AG04450 (cell line): ENCODE measurements at regions of chr6 and their contacts with region 1.

Region 1: DNA sequence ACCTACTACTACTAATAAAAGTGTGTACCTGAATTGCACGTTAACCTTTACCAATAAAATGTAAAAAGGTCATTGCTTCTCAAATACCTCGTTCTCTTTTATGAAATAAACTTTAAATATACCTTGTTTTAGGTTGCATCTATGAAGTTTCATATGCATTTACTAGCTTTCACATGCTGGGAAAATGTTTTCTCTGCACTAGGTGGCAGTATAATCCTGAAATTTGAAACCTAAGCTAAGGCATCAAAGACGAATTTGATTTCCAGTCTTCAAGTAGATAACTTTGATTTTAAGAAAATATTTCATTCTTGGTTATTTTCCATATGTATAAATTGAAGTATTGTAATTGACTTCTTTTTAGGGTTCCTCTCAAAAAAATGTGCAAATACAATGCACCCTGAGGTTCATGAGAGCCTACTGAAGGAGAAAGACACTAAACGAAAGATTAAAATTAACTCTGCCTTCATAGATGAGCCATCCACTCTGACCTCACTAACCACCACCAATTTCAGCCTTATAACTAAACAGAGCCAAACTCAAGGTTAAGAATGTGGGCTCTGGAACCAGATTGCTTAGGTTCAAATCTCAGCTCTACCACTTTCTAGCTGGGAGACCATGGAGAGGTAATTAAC is 7.3 kb upstream of the COL9A1 start:
- DNase-seq: no peak
- H3K4me3 ChIP-seq: no peak overlapping the region
- H3K27ac ChIP-seq: no peak overlapping the region
- H3K27me3 ChIP-seq: peaks cover 22% of the 10 kb centered on the region
- CTCF ChIP-seq: peak; percentile 64

Region 2: GRCh38 chr6:70289299-70289698 is 20.9 kb before region 1 on chr6:
- CTCF ChIA-PET with region 1: interaction called, 14 read pairs
- POLR2A ChIA-PET with region 1: no interaction called
- DNase-seq: no peak
- H3K4me3 ChIP-seq: no peak overlapping the region
- H3K27ac ChIP-seq: no peak overlapping the region
- H3K27me3 ChIP-seq: no peaks in the 10 kb centered on the region
- CTCF ChIP-seq: no peak

Region 3: DNA sequence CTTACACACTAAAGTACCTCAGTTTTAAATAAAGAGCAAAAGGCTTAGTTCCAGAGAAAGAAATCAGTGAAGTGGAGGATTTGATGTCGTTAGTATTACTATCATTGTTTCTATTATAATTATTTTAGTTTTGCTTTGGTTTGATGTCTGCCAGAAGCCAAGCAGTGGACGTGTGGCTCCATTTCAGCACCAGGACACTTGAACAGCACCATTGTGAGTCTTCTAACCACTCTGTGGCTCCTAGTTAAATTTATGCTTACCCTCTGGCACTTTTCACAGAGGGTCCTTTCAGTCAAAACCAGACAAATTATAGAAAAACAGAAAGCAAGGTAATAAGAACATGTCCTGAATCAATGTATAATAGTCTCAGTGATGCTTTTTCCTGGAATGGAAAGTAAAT is 10.7 kb before region 1 on chr6:
- CTCF ChIA-PET with region 1: interaction called, 22 read pairs
- POLR2A ChIA-PET with region 1: no interaction called
- DNase-seq: no peak
- H3K4me3 ChIP-seq: no peak overlapping the region
- H3K27ac ChIP-seq: no peak overlapping the region
- H3K27me3 ChIP-seq: no peaks in the 10 kb centered on the region
- CTCF ChIP-seq: no peak

Region 4: GRCh38 chr6:70336996-70337742 is 27.0 kb after region 1 on chr6:
- CTCF ChIA-PET with region 1: no interaction called
- POLR2A ChIA-PET with region 1: no interaction called
- DNase-seq: no peak
- H3K4me3 ChIP-seq: no peak overlapping the region
- H3K27ac ChIP-seq: no peak overlapping the region
- H3K27me3 ChIP-seq: no peaks in the 10 kb centered on the region
- CTCF ChIP-seq: no peak

Region 5: DNA sequence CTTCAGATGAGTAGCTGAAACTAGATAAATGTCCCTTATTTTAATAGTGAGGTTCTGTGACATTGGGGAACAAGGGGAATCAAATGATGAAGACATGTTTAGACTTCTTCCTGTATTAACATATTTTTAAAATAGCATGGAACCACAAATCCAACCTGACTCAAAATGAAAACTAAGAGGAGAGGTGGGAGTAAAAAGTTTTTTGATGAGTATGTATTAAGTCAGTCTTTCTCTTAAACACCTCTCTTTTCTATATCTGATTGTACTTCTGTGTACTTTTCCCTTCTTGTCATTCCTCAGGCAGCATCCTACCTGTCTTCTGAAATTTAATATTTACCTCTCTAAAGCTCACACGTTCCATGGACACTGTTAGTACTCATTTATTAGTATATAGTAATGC is 247.8 kb after region 1 on chr6:
- CTCF ChIA-PET with region 1: no interaction called
- POLR2A ChIA-PET with region 1: no interaction called
- DNase-seq: no peak
- H3K4me3 ChIP-seq: no peak overlapping the region
- H3K27ac ChIP-seq: no peak overlapping the region
- H3K27me3 ChIP-seq: no peaks in the 10 kb centered on the region
- CTCF ChIP-seq: no peak

Region 6: GRCh38 chr6:70955441-70956190 is 645.4 kb after region 1 on chr6:
- CTCF ChIA-PET with region 1: interaction called, 17 read pairs
- POLR2A ChIA-PET with region 1: no interaction called
- DNase-seq: peak; percentile 27
- H3K4me3 ChIP-seq: peak overlapping the region; percentile 49
- H3K27ac ChIP-seq: no peak overlapping the region
- H3K27me3 ChIP-seq: peaks cover 48% of the 10 kb centered on the region
- CTCF ChIP-seq: peak; percentile 78

Region 7: DNA sequence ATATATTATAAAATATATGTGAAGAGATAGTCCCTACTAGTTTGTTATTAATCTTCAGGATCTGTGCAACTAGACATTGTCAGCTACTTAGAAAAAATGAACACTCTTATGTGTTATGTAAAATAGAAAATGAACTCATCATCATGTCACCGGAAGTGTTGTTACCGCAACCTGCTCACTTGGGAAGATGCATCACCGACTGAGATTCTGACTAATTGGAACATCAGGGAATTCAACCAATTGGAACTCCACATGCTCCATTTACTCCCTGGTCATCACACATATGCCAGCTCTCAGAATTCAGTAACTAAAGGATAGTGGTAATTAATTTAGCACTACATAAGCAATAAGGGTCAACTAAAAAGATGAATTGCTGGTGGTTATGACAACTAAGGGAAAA is 663.4 kb after region 1 on chr6:
- CTCF ChIA-PET with region 1: no interaction called
- POLR2A ChIA-PET with region 1: no interaction called
- DNase-seq: no peak
- H3K4me3 ChIP-seq: no peak overlapping the region
- H3K27ac ChIP-seq: no peak overlapping the region
- H3K27me3 ChIP-seq: no peaks in the 10 kb centered on the region
- CTCF ChIP-seq: no peak

Region 8: GRCh38 chr6:71012866-71013469 is 702.8 kb after region 1 on chr6:
- CTCF ChIA-PET with region 1: interaction called, 68 read pairs
- POLR2A ChIA-PET with region 1: no interaction called
- DNase-seq: no peak
- H3K4me3 ChIP-seq: no peak overlapping the region
- H3K27ac ChIP-seq: no peak overlapping the region
- H3K27me3 ChIP-seq: no peaks in the 10 kb centered on the region
- CTCF ChIP-seq: peak; percentile 84